IMR-90 (cell line): ENCODE measurements at regions of chr2 and their contacts with region 1.

Region 1: GRCh38 chr2:165563468-165564225 is 94.1 kb downstream of the CSRNP3 start:
- DNase-seq: no peak
- ATAC-seq: no peak
- H3K4me3 ChIP-seq: no peak overlapping the region
- H3K27ac ChIP-seq: no peak overlapping the region
- H3K4me1 ChIP-seq: no peaks in the 10 kb centered on the region
- H3K27me3 ChIP-seq: no peaks in the 10 kb centered on the region
- CTCF ChIP-seq: no peak
- POLR2A ChIP-seq: no peak
- RAD21 ChIP-seq: no peak

Region 2: GRCh38 chr2:164134336-164134735 is 1429.3 kb before region 1 on chr2:
- CTCF ChIA-PET with region 1: no interaction called
- POLR2A ChIA-PET with region 1: no interaction called
- dilution Hi-C with region 1: no loop called
- in situ Hi-C with region 1: no loop called
- intact Hi-C with region 1: no loop called
- DNase-seq: no peak
- ATAC-seq: no peak
- H3K4me3 ChIP-seq: no peak overlapping the region
- H3K27ac ChIP-seq: no peak overlapping the region
- H3K4me1 ChIP-seq: no peaks in the 10 kb centered on the region
- H3K27me3 ChIP-seq: no peaks in the 10 kb centered on the region
- CTCF ChIP-seq: no peak
- POLR2A ChIP-seq: no peak
- RAD21 ChIP-seq: no peak

Region 3: DNA sequence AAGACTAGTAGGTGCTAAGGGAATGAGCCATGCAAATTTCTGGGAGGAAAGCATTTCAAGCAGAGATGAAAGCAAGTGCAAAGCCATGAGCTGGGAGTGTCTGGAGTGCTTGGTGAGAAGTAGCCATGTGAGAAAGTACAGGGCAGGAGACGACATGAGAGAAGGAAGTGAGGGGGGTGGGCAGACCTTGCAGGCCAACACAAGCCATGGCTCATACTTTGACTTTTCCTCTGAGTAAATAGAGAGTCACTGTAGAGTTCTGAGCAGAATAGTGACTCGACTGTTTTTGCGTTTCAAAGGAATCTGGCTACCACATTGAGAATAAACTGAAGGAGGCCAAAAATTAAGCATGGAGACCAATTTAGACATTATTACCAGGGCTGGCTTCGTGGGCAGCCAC is 282.3 kb before region 1 on chr2:
- CTCF ChIA-PET with region 1: no interaction called
- POLR2A ChIA-PET with region 1: no interaction called
- dilution Hi-C with region 1: no loop called
- in situ Hi-C with region 1: no loop called
- intact Hi-C with region 1: no loop called
- DNase-seq: no peak
- ATAC-seq: no peak
- H3K4me3 ChIP-seq: no peak overlapping the region
- H3K27ac ChIP-seq: no peak overlapping the region
- H3K4me1 ChIP-seq: no peaks in the 10 kb centered on the region
- H3K27me3 ChIP-seq: no peaks in the 10 kb centered on the region
- CTCF ChIP-seq: no peak
- POLR2A ChIP-seq: no peak
- RAD21 ChIP-seq: no peak

Region 4: GRCh38 chr2:165508927-165509326 is 54.7 kb before region 1 on chr2:
- CTCF ChIA-PET with region 1: no interaction called
- POLR2A ChIA-PET with region 1: no interaction called
- dilution Hi-C with region 1: no loop called
- in situ Hi-C with region 1: no loop called
- intact Hi-C with region 1: no loop called
- DNase-seq: no peak
- ATAC-seq: no peak
- H3K4me3 ChIP-seq: no peak overlapping the region
- H3K27ac ChIP-seq: no peak overlapping the region
- H3K4me1 ChIP-seq: no peaks in the 10 kb centered on the region
- H3K27me3 ChIP-seq: no peaks in the 10 kb centered on the region
- CTCF ChIP-seq: no peak
- POLR2A ChIP-seq: no peak
- RAD21 ChIP-seq: no peak

Region 5: GRCh38 chr2:165582409-165582808 is 18.8 kb after region 1 on chr2:
- CTCF ChIA-PET with region 1: no interaction called
- POLR2A ChIA-PET with region 1: no interaction called
- dilution Hi-C with region 1: no loop called
- in situ Hi-C with region 1: no loop called
- intact Hi-C with region 1: loop called (anchors 2 kb)
- DNase-seq: no peak
- ATAC-seq: no peak
- H3K4me3 ChIP-seq: no peak overlapping the region
- H3K27ac ChIP-seq: no peak overlapping the region
- H3K4me1 ChIP-seq: no peaks in the 10 kb centered on the region
- H3K27me3 ChIP-seq: no peaks in the 10 kb centered on the region
- CTCF ChIP-seq: no peak
- POLR2A ChIP-seq: no peak
- RAD21 ChIP-seq: no peak

Region 6: GRCh38 chr2:165627470-165627869 is 63.8 kb after region 1 on chr2:
- CTCF ChIA-PET with region 1: no interaction called
- POLR2A ChIA-PET with region 1: no interaction called
- dilution Hi-C with region 1: no loop called
- in situ Hi-C with region 1: no loop called
- intact Hi-C with region 1: no loop called
- DNase-seq: peak; percentile 73
- ATAC-seq: peak; percentile 65
- H3K4me3 ChIP-seq: no peak overlapping the region
- H3K27ac ChIP-seq: no peak overlapping the region
- H3K4me1 ChIP-seq: no peaks in the 10 kb centered on the region
- H3K27me3 ChIP-seq: no peaks in the 10 kb centered on the region
- CTCF ChIP-seq: no peak
- POLR2A ChIP-seq: no peak
- RAD21 ChIP-seq: no peak